Activated T-helper 1 cell treated with anti-CD3 and anti-CD28 coated beads, Interleukin-12 subunit alpha, Interleukin-12 subunit beta, Interleukin-2, Interleukin-4 antibody, amounts not matched to agents 30 ng/mL and 10 ng/mL and 1 ng/mL, durations not matched to agents 14 hours and 24 hours and 36 hours (primary cell): ENCODE measurements at regions of chr5 and their contacts with region 1.

Region 1: DNA sequence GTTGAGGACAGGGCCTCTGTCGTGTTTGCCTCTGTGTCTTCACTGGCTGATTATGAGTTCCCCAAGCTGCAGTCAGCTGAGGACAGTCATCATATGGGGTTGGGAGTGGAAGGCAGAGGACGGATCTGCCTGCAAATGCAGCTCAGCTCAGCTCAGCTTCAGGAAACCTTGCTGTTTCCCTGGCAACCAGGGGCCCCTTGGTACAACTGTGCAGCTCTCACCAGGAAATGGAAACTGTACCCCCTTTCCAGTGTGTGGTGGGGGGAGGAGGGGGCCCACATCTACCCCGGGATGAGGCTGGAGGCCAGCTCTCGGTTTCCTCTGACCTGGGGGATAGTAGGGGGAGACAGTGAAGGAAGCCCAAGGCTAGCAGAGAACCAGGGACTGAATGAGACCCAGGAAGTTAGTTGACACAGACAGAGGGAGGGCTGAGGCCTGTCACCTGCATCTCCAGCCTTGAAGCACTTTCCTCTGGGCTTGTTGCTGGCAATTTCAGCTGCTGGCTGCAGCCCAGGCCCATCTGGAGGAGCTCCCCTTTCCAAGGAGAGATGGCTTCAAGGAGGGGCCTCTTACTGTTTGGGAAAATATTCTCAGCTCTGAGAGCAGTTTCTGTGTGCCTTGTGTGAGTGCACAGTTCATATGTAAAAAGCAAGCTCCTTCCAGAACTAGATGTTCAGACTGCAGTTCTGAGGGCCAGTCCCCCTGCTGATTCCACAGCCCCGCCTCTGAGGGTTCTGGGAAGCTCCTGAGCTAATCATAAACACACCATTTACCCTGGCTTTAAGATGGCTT is 6.9 kb downstream of the ANXA6 start:
- DNase-seq: peak; percentile 67
- H3K4me3 Mint-ChIP-seq: peak overlapping the region; percentile 71
- H3K27ac Mint-ChIP-seq: peak overlapping the region; percentile 96
- H3K4me1 Mint-ChIP-seq: peaks cover 95% of the 10 kb centered on the region
- H3K27me3 Mint-ChIP-seq: no peaks in the 10 kb centered on the region

Region 2: GRCh38 chr5:150778517-150779396 is 371.9 kb before region 1 on chr5 and contains the start of gene SMIM3:
- intact Hi-C with region 1: loop called (anchors 1 kb)
- DNase-seq: peak; percentile 53
- H3K4me3 Mint-ChIP-seq: peak within 1 kb of the TSS; percentile 100
- H3K27ac Mint-ChIP-seq: peak within 1 kb of the TSS; percentile 83
- H3K4me1 Mint-ChIP-seq: peaks cover 62% of the 10 kb centered on the region
- H3K27me3 Mint-ChIP-seq: peaks cover 2% of the 10 kb centered on the region
- total RNA-seq, gene SMIM3: 12.8 and 13.4 TPM in 2 replicates

Region 3: GRCh38 chr5:150904479-150905318 is 246.0 kb before region 1 on chr5 and contains the start of gene ZNF300:
- intact Hi-C with region 1: no loop called
- DNase-seq: peak; percentile 2
- H3K4me3 Mint-ChIP-seq: peak within 1 kb of the TSS; percentile 77
- H3K27ac Mint-ChIP-seq: peak within 1 kb of the TSS; percentile 86
- H3K4me1 Mint-ChIP-seq: no peaks in the 10 kb centered on the region
- H3K27me3 Mint-ChIP-seq: no peaks in the 10 kb centered on the region
- total RNA-seq, gene ZNF300: 0.56 and 0.57 TPM in 2 replicates

Region 4: GRCh38 chr5:151093476-151093889 is 57.2 kb before region 1 on chr5:
- intact Hi-C with region 1: loop called (anchors 2 kb)
- DNase-seq: no peak
- H3K4me3 Mint-ChIP-seq: peak overlapping the region; percentile 67
- H3K27ac Mint-ChIP-seq: peak overlapping the region; percentile 82
- H3K4me1 Mint-ChIP-seq: peaks cover 80% of the 10 kb centered on the region
- H3K27me3 Mint-ChIP-seq: no peaks in the 10 kb centered on the region

Region 5: DNA sequence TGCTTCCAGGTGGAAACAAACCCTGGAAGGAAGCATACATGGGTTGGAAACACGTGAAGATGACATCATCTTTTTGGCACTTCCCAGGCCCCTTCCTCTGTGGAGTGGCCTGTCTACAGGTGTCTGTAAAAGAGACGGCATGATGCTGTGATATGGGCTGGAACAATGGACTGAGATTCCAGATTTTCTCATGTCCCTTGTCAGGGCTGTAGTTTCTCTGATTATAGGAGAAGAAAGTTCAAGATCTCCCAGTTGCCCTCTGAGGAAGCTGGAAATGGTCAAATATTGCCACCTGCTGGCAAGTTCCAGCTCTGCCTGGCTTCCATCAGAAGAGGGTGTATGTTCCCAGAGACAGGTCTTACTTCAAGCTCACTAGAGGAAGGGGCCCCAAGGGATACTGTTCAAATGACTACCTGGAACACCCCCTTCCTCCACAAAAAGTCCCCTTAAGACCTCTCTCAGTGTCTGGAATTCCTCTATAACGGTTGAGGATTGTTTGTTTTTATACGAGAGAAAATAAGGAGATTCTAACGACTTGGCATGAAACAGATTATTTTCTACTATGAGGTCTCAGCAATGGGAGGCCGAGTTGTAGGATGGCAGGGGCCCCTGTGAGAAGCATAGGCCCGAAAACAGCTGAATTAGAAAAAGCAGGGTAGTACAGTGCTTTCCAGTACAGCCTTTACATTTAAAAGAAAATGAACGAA is 14.2 kb after region 1 on chr5:
- intact Hi-C with region 1: loop called (anchors 1 kb)
- DNase-seq: peak; percentile 65
- H3K4me3 Mint-ChIP-seq: no peak overlapping the region
- H3K27ac Mint-ChIP-seq: no peak overlapping the region
- H3K4me1 Mint-ChIP-seq: peaks cover 14% of the 10 kb centered on the region
- H3K27me3 Mint-ChIP-seq: peaks cover 4% of the 10 kb centered on the region

Region 6: GRCh38 chr5:151223469-151224264 is 73.0 kb after region 1 on chr5 and contains the start of gene CCDC69:
- intact Hi-C with region 1: loop called (anchors 2 kb)
- DNase-seq: peak; percentile 43
- H3K4me3 Mint-ChIP-seq: peak within 1 kb of the TSS; percentile 77
- H3K27ac Mint-ChIP-seq: peak within 1 kb of the TSS; percentile 78
- H3K4me1 Mint-ChIP-seq: peaks cover 49% of the 10 kb centered on the region
- H3K27me3 Mint-ChIP-seq: no peaks in the 10 kb centered on the region
- total RNA-seq, gene CCDC69: 24.3 and 25.4 TPM in 2 replicates